Esophagus muscularis mucosa (tissue), 4 donors: ENCODE measurements at regions of chr1 and their contacts with region 1.

Region 1: GRCh38 chr1:39105061-39105840 is 79.1 kb downstream of the NDUFS5 start:
- DNase-seq: no peak
- H3K4me3 ChIP-seq: peak overlapping the region; percentile 78 to 93 (median 85)
- H3K27ac ChIP-seq: peak overlapping the region; percentile 96 to 99 (median 98)
- H3K4me1 ChIP-seq: peaks cover 60 to 75% (median 68%) of the 10 kb centered on the region in 4 donors
- H3K27me3 ChIP-seq: no peaks in the 10 kb centered on the region
- CTCF ChIP-seq: no peak
- EP300 ChIP-seq: no peak
- POLR2A ChIP-seq: no peak

Region 2: DNA sequence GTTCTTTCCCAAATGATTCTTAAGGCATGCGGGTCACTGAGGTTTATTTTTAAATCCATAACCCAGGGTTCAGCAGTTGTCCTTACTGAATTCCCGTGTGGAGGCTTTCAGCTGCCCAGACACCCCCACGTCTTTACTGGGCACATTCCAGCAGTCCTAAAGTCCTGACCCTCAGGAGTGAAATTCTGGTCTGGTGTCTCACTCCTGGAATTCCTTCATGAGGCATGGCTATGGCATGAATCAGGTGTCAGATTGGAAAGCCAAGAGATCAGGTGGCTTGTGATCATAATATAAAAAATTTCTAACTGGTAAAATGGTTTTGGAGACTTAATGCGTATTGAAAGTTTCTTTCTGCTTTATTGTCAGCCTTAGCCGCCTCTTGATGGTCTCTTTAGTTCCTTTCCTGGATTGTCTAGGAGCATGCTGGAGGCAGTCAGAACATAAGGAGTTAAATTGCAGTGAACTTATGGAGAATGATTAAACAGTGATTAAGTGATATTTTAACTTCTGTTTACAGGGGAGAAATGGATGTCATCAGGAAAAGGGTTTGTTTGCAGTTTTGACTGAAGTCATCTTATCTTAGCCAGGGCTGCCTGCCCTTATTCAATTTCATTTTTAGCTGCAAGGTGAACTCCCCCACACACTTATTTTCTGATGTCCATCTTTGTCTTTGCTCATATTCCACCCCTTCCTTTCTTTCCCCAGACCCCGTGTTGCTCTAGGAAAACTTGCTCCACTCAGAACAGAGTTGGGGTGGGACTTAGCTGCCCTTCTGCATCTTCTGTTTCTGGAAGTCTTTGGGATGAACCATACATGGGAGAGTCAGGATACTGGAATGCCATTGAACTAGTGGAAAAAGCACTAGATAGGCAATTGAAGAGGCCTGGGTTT is 73.5 kb after region 1 on chr1:
- intact Hi-C with region 1: loop called (anchors 5 kb)
- DNase-seq: no peak
- H3K4me3 ChIP-seq: peak overlapping the region in 1 of 4 donors; percentile 15
- H3K27ac ChIP-seq: peak overlapping the region; percentile 66 to 83 (median 76)
- H3K4me1 ChIP-seq: peaks cover 38 to 86% (median 79%) of the 10 kb centered on the region in 4 donors
- H3K27me3 ChIP-seq: no peaks in the 10 kb centered on the region
- CTCF ChIP-seq: no peak
- EP300 ChIP-seq: peak; percentile 6
- POLR2A ChIP-seq: no peak

Region 3: DNA sequence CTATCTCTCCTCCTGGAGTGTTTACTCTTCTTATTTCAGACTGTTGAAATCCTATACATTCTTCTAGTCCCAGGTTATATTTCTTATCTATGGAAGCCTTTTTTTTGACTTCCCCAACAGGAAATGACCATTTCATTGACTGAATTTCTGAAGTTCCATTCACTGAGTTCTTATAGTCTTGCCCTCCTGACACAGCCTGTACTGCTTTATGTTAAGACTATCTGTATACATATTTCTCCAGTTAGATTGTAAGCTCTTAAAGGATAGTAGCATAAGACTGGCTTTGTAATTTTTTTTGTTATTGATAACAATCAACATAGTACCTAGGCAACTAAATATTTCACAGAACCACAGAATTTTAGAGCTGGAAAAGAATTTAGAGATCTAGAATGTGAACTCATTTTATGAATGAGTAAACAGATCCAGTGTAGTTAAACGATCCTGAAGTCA is 84.4 kb after region 1 on chr1:
- intact Hi-C with region 1: loop called (anchors 2 kb)
- DNase-seq: no peak
- H3K4me3 ChIP-seq: no peak overlapping the region
- H3K27ac ChIP-seq: peak overlapping the region; percentile 15 to 94 (median 70)
- H3K4me1 ChIP-seq: peaks cover 36 to 94% (median 83%) of the 10 kb centered on the region in 4 donors
- H3K27me3 ChIP-seq: no peaks in the 10 kb centered on the region
- CTCF ChIP-seq: no peak
- EP300 ChIP-seq: no peak
- POLR2A ChIP-seq: no peak